ENCODE measurements at regions of chr6 and their contacts with region 1.

Region 1: GRCh38 chr6:149431905-149432775 is 32.1 kb downstream of the SUMO4 start:
- DNase-seq: peak; percentile 89 to 92 (median 92)
- ATAC-seq: peak; percentile 97
- H3K4me3 ChIP-seq: no peak overlapping the region
- H3K27ac ChIP-seq: no peak overlapping the region
- H3K4me1 ChIP-seq: no peaks in the 10 kb centered on the region; a peak in 1 of 5 replicates
- H3K27me3 ChIP-seq: peaks cover 22 to 52% of the 10 kb centered on the region in 2 experiments
- CTCF ChIP-seq: peak; percentile 96 to 98 (median 97)
- EP300 ChIP-seq: 0 out of 2 replicates have a peak, but pooled peaks have one; percentile 13
- POLR2A ChIP-seq: no peak
- RAD21 ChIP-seq: peak; percentile 99 to 100

Region 2: DNA sequence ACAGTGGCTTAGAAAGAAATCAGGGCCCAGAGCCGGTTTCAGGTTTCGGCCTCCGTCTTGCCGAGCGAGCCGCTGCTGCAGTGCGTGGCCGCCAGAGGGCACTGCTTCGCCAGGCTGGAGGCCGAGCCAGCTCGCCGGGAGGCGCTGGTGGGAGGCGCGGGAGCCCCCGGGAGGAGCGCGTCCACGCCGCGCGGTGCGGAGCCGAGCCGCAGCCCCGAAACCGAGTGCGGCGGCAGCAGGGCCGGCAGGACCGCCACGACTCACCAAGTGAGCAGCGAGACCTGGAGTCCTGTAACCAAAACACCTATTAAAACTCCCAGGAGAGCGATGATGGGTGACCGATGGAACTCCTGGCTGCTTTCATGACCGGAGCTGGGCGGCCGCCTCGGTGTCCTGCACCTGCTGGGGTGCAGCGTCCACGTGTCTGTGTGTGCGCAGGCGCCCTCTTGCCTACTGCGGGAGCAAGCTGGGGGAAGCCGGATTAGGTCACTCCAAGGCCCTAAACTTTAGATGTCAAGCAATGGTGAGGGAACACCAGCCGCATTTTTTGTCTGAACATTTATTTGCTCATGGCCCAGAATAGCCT is 872.2 kb before region 1 on chr6:
- CTCF ChIA-PET with region 1: no interaction called
- POLR2A ChIA-PET with region 1: no interaction called
- in situ Hi-C with region 1: loop called (anchors 25 kb)
- intact Hi-C with region 1: no loop called
- DNase-seq: peak; percentile 73 to 89 (median 82)
- ATAC-seq: peak; percentile 98
- H3K4me3 ChIP-seq: no peak overlapping the region
- H3K27ac ChIP-seq: no peak overlapping the region
- H3K4me1 ChIP-seq: peaks cover 0 to 6% of the 10 kb centered on the region in 2 experiments; a peak in 3 of 5 replicates
- H3K27me3 ChIP-seq: peaks cover 25 to 65% of the 10 kb centered on the region in 2 experiments
- CTCF ChIP-seq: peak; percentile 96 to 98 (median 98)
- EP300 ChIP-seq: no peak
- POLR2A ChIP-seq: no peak
- RAD21 ChIP-seq: peak; percentile 80 to 90

Region 3: GRCh38 chr6:149028767-149029405 is 403.3 kb before region 1 on chr6:
- CTCF ChIA-PET with region 1: interaction called, 39 read pairs
- POLR2A ChIA-PET with region 1: no interaction called
- in situ Hi-C with region 1: loop called (anchors 5 kb)
- intact Hi-C with region 1: loop called (anchors 1 kb)
- DNase-seq: peak; percentile 65 to 90 (median 74)
- ATAC-seq: peak; percentile 88
- H3K4me3 ChIP-seq: no peak overlapping the region
- H3K27ac ChIP-seq: no peak overlapping the region
- H3K4me1 ChIP-seq: 0 out of 5 replicates have a peak, but pooled peaks cover 0 to 3% of the 10 kb centered on the region in 2 experiments
- H3K27me3 ChIP-seq: peaks cover 14 to 18% of the 10 kb centered on the region in 2 experiments; a peak in 4 of 5 replicates
- CTCF ChIP-seq: peak; percentile 62 to 87 (median 69); a peak in 5 of 6 replicates
- EP300 ChIP-seq: no peak
- POLR2A ChIP-seq: no peak
- RAD21 ChIP-seq: peak; percentile 93 to 95

Region 4: GRCh38 chr6:149082286-149082707 is 349.8 kb before region 1 on chr6:
- CTCF ChIA-PET with region 1: interaction called, 67 read pairs
- POLR2A ChIA-PET with region 1: no interaction called
- in situ Hi-C with region 1: no loop called
- intact Hi-C with region 1: loop called (anchors 1 kb)
- DNase-seq: peak; percentile 61 to 87 (median 70)
- ATAC-seq: peak; percentile 98
- H3K4me3 ChIP-seq: no peak overlapping the region
- H3K27ac ChIP-seq: no peak overlapping the region
- H3K4me1 ChIP-seq: no peaks in the 10 kb centered on the region
- H3K27me3 ChIP-seq: peaks cover 6 to 23% of the 10 kb centered on the region in 2 experiments
- CTCF ChIP-seq: peak; percentile 77 to 93 (median 87)
- EP300 ChIP-seq: no peak
- POLR2A ChIP-seq: no peak
- RAD21 ChIP-seq: peak; percentile 98

Region 5: GRCh38 chr6:149190224-149190831 is 241.8 kb before region 1 on chr6:
- CTCF ChIA-PET with region 1: no interaction called
- POLR2A ChIA-PET with region 1: no interaction called
- in situ Hi-C with region 1: no loop called
- intact Hi-C with region 1: loop called (anchors 10 kb)
- DNase-seq: peak in 1 of 4 experiments; percentile 49
- ATAC-seq: peak; percentile 61; the same call in 2 of the 3 replicates
- H3K4me3 ChIP-seq: no peak overlapping the region
- H3K27ac ChIP-seq: no peak overlapping the region
- H3K4me1 ChIP-seq: no peaks in the 10 kb centered on the region
- H3K27me3 ChIP-seq: peaks cover 0 to 4% of the 10 kb centered on the region in 2 experiments; a peak in 3 of 5 replicates
- CTCF ChIP-seq: peak; percentile 49 to 56 (median 53); a peak in 5 of 6 replicates
- EP300 ChIP-seq: no peak
- POLR2A ChIP-seq: no peak
- RAD21 ChIP-seq: peak in 1 of 2 experiments; percentile 63; a peak in 2 of 4 replicates

Region 6: DNA sequence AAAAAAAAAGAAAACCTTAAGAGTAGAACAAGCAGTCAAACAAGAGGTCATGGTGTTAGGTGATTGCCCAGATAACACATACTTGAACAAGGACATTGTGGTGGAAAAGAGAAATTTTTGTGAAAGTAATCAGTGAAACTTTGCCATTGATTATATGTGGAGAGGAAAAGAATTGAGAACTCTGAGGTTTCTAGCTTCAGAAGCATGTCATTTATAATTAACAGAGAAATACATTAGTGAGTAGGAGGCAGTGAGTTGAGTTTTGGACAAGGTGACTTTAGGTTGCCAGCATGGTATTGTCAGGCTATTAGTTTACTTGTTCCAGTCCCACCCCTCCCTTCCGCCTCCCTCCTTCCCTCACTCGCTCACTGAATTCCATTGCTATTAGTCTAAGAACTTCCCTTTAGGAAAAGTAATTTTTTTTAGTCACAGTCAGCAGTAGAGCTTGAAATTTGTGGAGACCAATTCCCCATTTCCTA is 97.4 kb before region 1 on chr6:
- CTCF ChIA-PET with region 1: no interaction called
- POLR2A ChIA-PET with region 1: no interaction called
- in situ Hi-C with region 1: no loop called
- intact Hi-C with region 1: no loop called
- DNase-seq: no peak
- ATAC-seq: no peak; the same call in 2 of the 3 replicates
- H3K4me3 ChIP-seq: no peak overlapping the region
- H3K27ac ChIP-seq: no peak overlapping the region
- H3K4me1 ChIP-seq: peaks cover 0 to 16% of the 10 kb centered on the region in 2 experiments; a peak in 3 of 5 replicates
- H3K27me3 ChIP-seq: no peaks in the 10 kb centered on the region
- CTCF ChIP-seq: no peak
- EP300 ChIP-seq: no peak
- POLR2A ChIP-seq: no peak
- RAD21 ChIP-seq: no peak

Region 7: GRCh38 chr6:149499066-149499465 is 66.9 kb after region 1 on chr6:
- CTCF ChIA-PET with region 1: no interaction called
- POLR2A ChIA-PET with region 1: no interaction called
- in situ Hi-C with region 1: no loop called
- intact Hi-C with region 1: no loop called
- DNase-seq: no peak
- ATAC-seq: no peak
- H3K4me3 ChIP-seq: no peak overlapping the region
- H3K27ac ChIP-seq: no peak overlapping the region
- H3K4me1 ChIP-seq: peaks cover 0 to 5% of the 10 kb centered on the region in 2 experiments; a peak in 2 of 5 replicates
- H3K27me3 ChIP-seq: peaks cover 0 to 2% of the 10 kb centered on the region in 2 experiments; a peak in 1 of 5 replicates
- CTCF ChIP-seq: no peak
- EP300 ChIP-seq: no peak
- POLR2A ChIP-seq: no peak
- RAD21 ChIP-seq: no peak

Region 8: DNA sequence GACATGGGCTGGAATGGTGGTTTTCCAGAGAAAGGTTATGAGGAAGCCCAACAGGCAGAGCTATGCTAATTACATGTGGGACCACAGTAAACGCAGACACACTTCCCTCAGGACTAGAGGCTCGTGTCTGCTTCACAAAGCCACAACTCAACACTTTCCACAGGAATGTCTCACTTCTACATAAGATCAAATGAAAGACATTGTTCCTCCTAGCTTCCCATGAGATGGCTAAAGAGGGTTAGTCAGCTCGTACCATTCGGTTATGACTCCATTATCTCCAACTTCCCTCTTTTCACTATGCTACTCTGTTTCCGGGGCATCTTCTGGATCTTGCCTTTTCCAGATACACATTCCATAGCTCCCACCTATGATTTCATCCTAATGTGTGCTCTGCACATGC is 81.8 kb after region 1 on chr6:
- CTCF ChIA-PET with region 1: no interaction called
- POLR2A ChIA-PET with region 1: no interaction called
- in situ Hi-C with region 1: no loop called
- intact Hi-C with region 1: loop called (anchors 2 kb)
- DNase-seq: no peak
- ATAC-seq: no peak
- H3K4me3 ChIP-seq: no peak overlapping the region
- H3K27ac ChIP-seq: no peak overlapping the region
- H3K4me1 ChIP-seq: no peaks in the 10 kb centered on the region
- H3K27me3 ChIP-seq: no peaks in the 10 kb centered on the region
- CTCF ChIP-seq: no peak
- EP300 ChIP-seq: no peak
- POLR2A ChIP-seq: no peak
- RAD21 ChIP-seq: no peak